ENCODE measurements at regions of chr3 and their contacts with region 1.

Region 1: DNA sequence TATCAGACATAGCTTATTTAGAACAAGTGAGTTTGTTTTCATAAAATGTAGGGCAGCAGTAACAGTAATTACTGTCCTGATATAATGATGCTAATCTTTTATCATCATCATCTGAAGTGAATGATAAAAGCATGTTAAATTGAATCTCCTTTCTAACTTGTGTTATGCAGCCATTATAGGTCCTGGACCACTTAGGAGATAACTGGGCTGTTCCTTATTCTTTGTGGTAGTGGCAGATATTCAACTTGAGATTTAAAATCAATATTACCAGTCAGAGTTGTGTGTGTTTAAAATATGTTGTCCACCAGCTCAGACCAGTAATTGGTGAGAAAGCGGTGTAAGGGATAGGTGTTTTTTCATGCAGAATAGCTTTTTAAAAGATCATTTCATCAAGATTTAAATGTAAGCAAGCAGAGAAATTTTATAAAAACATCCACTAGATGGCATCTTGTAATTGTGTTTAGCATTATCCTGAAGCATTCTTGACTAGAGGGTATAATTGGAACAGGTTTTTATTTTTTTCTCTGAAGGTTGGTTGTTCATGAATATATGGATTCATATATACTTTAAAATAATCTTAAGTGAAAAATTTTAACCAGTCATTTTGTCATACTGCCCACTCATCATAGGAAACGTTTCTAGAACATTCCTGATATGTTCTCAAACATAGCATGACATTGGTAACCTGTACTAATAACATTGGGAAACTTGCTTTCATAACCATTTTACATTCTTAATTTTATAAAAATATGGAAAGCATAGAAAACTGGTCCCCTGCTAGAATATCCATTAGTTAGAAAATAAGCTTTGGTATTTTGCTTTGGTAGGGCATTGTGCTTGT is 153.9 kb downstream of the BBX start:
- H3K4me3 Mint-ChIP-seq: no peak overlapping the region
- H3K27ac Mint-ChIP-seq: no peak overlapping the region
- H3K4me1 Mint-ChIP-seq: peaks cover 28% of the 10 kb centered on the region
- H3K27me3 Mint-ChIP-seq: no peaks in the 10 kb centered on the region

Region 2: DNA sequence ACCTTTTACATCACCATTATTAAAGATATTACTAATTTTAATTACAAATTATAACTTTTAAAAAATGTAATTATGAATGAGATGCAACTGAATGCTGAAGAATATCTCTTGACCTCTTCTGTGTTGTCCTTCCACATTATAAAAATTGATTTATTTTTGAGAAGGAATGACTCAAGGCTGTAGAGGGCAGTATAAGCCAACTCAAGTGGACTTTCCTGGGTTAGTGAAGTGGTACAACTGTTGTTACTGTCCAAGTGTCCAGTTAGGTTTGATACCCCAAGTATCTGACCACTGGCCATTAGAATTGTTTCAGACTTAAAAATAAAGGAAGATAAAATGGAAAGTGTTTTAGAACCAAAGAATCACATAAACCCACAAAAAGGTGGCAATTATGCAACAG is 102.0 kb before region 1 on chr3:
- intact Hi-C with region 1: loop called (anchors 5 kb)
- H3K4me3 Mint-ChIP-seq: no peak overlapping the region
- H3K27ac Mint-ChIP-seq: no peak overlapping the region
- H3K4me1 Mint-ChIP-seq: peaks cover 11% of the 10 kb centered on the region
- H3K27me3 Mint-ChIP-seq: no peaks in the 10 kb centered on the region

Region 3: GRCh38 chr3:107718547-107718946 is 41.9 kb after region 1 on chr3:
- intact Hi-C with region 1: no loop called
- H3K4me3 Mint-ChIP-seq: no peak overlapping the region
- H3K27ac Mint-ChIP-seq: no peak overlapping the region
- H3K4me1 Mint-ChIP-seq: no peaks in the 10 kb centered on the region
- H3K27me3 Mint-ChIP-seq: no peaks in the 10 kb centered on the region

Region 4: GRCh38 chr3:107740992-107741896 is 64.6 kb after region 1 on chr3:
- intact Hi-C with region 1: loop called (anchors 1 kb)
- H3K4me3 Mint-ChIP-seq: no peak overlapping the region
- H3K27ac Mint-ChIP-seq: no peak overlapping the region
- H3K4me1 Mint-ChIP-seq: peaks cover 11% of the 10 kb centered on the region
- H3K27me3 Mint-ChIP-seq: no peaks in the 10 kb centered on the region

Region 5: DNA sequence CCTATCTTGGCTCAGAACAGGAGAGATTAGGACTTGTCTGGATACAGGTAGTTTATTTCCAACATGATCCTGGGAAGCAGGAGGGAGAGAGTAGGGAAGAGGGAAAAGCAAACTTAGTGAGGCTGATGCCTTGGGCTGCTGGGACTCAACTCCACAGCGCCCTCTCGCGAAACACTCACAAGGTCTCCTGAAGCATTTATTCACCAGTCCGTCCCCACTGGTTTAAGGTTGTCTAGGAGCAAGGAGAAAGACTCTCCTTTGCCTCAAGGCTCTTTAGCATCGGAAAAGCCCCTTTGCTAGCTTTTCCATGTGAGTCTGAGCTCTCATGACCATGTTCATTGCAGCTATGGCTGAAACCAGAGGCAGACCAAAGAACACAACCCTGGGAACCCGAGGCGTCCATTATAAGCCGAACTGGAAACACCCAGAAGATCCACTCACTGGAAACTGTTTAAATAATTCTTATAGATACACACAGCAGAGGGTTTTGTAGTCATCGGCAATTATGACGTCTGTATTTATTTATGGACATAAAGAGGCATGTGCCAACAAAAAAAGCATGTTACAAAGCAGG is 169.7 kb after region 1 on chr3:
- intact Hi-C with region 1: loop called (anchors 10 kb)
- H3K4me3 Mint-ChIP-seq: no peak overlapping the region
- H3K27ac Mint-ChIP-seq: no peak overlapping the region
- H3K4me1 Mint-ChIP-seq: no peaks in the 10 kb centered on the region
- H3K27me3 Mint-ChIP-seq: no peaks in the 10 kb centered on the region

Region 6: DNA sequence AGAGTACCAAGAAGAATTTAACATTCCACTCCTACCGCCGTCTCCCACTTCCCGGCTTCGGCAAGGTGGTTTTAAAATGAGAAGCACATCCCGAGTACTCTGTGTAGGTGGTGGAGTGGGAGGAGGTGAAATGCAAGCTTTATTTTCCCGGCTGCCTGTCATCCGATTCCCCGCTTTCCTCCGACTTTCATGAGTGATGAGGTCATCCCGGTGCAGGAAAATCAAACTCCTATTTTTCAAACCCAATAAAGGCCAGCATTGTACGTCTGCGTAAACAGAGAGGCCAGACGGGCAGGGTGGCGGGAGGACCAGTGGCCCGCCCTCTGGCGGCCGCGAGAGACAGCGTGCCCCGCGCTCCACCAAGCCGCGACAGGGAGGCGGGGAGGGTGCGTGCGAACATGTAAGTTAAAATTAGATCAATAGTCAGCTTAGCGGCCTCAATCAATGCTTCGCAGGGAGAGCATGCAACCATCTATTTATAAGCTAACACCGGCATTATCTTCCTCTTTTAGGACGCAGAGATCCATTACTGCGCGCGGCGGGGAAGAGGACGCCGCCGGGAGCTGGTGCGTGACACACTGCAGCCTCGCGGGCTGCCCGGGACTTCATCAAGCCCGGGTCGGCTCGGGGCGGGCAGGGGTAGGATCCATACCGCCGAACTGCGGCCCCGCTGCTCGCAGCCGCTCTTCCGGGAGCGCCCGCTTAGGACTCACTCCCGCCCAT is 250.8 kb after region 1 on chr3:
- intact Hi-C with region 1: loop called (anchors 10 kb)
- H3K4me3 Mint-ChIP-seq: peak overlapping the region; percentile 81
- H3K27ac Mint-ChIP-seq: peak overlapping the region; percentile 81
- H3K4me1 Mint-ChIP-seq: peaks cover 16% of the 10 kb centered on the region
- H3K27me3 Mint-ChIP-seq: peaks cover 12% of the 10 kb centered on the region

Region 7: DNA sequence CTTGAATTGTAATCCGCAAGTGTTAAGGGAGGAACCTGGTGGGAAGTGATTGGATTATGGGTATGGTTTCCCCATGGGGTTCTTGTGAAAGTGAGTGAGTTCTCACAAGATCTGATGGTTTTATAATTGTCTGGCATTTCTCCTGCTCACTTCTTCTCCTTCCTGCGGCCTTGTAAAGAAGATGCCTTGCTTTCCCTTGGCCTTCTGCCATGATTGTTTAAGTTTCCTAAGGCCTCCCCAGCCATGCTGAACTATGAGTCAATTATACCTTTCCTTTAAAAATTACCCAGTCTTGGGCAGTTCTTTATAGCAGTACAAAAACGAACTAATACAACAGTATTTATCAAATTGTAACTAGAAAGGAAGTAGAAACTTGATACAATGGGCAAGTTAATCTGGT is 513.7 kb after region 1 on chr3:
- intact Hi-C with region 1: no loop called
- H3K4me3 Mint-ChIP-seq: no peak overlapping the region
- H3K27ac Mint-ChIP-seq: no peak overlapping the region
- H3K4me1 Mint-ChIP-seq: no peaks in the 10 kb centered on the region
- H3K27me3 Mint-ChIP-seq: no peaks in the 10 kb centered on the region

Region 8: GRCh38 chr3:108477511-108478147 is 800.9 kb after region 1 on chr3:
- intact Hi-C with region 1: loop called (anchors 10 kb)
- H3K4me3 Mint-ChIP-seq: no peak overlapping the region
- H3K27ac Mint-ChIP-seq: no peak overlapping the region
- H3K4me1 Mint-ChIP-seq: no peaks in the 10 kb centered on the region
- H3K27me3 Mint-ChIP-seq: no peaks in the 10 kb centered on the region

Measured in dendritic cell treated with granulocyte-macrophage colony-stimulating factor and Interleukin-4, amounts not matched to agents 40 ng/mL and 50 ng/mL, for 4 days (primary cell).